ENCODE measurements at regions of chr5 and their contacts with region 1.

Region 1: GRCh38 chr5:42583322-42583721 is 160.1 kb downstream of the GHR start:
- DNase-seq: peak; percentile 56
- H3K4me3 Mint-ChIP-seq: no peak overlapping the region
- H3K27ac Mint-ChIP-seq: no peak overlapping the region
- H3K4me1 Mint-ChIP-seq: no peaks in the 10 kb centered on the region
- H3K27me3 Mint-ChIP-seq: peaks cover 60% of the 10 kb centered on the region
- CTCF ChIP-seq: peak; percentile 58

Region 2: DNA sequence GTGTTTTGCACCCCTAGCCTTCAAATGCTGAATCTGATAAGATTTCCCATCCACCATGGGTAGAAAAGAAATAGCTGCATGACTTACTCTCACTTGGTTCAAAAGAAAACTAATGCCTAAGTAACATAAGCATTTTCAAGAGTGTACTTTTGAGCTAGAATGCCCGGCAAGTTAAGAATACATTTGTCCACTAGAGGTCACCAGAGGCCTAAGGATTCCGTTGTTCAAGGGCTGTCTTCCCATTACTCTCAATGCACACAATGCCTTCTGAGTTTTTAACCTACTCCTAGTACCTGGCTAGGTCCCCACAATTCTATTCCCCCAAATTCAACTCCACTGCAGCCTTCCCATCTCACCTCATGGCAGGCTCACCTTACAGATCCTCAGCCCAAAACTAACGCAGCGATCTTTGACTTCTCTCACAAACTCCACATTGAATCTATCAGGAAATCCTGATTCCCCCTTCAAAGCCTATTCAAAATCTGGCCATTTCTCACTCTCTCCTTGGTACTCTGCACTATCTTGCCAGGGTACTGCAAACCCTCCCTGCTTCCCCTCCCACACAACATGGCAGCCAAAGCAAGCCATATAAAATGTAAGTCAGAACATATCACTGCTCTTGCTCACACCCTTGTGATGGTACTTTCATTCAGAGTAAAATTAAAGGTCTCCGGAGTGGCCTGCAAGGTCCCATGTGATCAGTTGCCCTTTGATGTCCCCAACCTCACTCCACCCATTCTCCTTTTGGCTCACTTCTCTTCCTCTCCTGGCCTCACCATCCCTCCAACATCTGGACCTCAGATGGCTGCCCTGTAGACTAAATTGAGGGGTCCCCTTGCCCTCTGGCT is 726.5 kb before region 1 on chr5:
- CTCF ChIA-PET with region 1: interaction called, 4 read pairs
- intact Hi-C with region 1: loop called (anchors 1 kb)
- DNase-seq: peak; percentile 60
- H3K4me3 Mint-ChIP-seq: no peak overlapping the region
- H3K27ac Mint-ChIP-seq: no peak overlapping the region
- H3K4me1 Mint-ChIP-seq: no peaks in the 10 kb centered on the region
- H3K27me3 Mint-ChIP-seq: no peaks in the 10 kb centered on the region
- CTCF ChIP-seq: peak; percentile 46

Region 3: DNA sequence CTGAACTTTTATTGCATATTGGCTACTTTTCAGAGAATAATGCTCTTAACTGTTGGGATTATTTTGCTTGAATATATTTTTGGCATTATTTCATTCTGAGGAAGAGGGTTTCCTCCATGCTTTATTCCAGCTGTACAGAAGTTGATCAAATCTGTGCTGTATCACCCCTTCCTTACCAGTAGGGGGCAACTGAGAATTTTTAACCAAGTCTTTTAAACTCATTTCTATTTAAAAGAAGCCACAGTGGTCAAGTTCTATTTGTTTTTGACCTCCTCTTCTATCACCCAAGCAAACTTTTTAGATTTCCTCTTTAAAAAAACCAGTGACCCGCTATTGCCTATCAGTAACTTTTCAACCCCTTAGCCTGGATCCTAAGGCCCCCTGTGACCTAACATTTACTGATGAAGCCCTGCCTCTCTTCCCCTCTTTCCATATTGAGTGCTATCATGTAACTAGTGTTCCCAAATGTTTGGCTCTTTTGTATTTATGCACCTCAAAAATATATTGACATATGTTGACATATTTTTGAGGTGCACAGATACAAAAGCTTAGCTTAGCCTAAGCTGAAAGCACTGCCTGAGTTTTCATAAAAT is 577.7 kb before region 1 on chr5:
- CTCF ChIA-PET with region 1: interaction called, 3 read pairs
- intact Hi-C with region 1: loop called (anchors 10 kb)
- DNase-seq: no peak
- H3K4me3 Mint-ChIP-seq: no peak overlapping the region
- H3K27ac Mint-ChIP-seq: no peak overlapping the region
- H3K4me1 Mint-ChIP-seq: no peaks in the 10 kb centered on the region
- H3K27me3 Mint-ChIP-seq: no peaks in the 10 kb centered on the region
- CTCF ChIP-seq: peak; percentile 71

Region 4: GRCh38 chr5:42228279-42228678 is 355.0 kb before region 1 on chr5:
- CTCF ChIA-PET with region 1: interaction called, 3 read pairs
- intact Hi-C with region 1: loop called (anchors 5 kb)
- DNase-seq: no peak
- H3K4me3 Mint-ChIP-seq: no peak overlapping the region
- H3K27ac Mint-ChIP-seq: no peak overlapping the region
- H3K4me1 Mint-ChIP-seq: no peaks in the 10 kb centered on the region
- H3K27me3 Mint-ChIP-seq: peaks cover 21% of the 10 kb centered on the region
- CTCF ChIP-seq: no peak

Region 5: DNA sequence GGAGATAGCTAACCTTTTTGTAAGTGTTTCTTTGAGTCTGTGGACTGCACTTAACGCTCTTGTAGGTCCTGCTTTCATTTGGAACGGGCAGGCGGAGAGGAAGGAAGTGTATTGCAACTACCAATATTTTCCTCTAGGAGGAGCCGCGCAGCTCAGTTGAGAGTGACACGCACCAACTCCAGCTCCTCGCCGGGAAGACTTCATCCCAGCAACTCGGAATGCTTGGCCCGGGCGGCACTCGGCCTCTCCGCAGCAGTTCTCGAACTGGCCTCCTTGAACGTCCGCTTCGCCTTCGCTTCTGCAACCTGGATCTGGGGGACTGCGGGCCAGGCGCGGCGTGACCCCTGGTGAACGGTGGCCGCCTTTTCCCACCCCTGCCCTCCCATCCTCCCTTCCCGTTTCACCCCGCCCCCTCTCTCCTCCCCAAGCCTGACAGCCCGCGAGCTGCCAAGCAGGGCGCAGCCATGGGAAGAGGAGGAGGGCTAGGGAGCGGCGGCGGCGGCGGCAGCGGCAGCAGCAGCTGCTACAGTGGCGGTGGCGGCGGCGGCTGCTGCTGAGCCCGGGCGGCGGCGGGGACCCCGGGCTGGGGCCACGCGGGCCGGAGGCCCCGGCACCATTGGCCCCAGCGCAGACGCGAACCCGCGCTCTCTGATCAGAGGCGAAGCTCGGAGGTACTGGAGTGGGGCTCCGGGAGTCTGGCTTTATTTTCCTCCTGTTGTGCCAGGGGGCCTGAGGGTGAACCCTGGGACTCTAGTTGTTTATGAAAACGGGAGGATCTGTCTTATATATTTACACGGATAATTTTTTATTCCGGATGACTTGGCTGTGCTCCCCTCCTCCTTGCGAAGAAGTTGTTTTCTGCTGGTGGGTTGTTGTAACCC is 159.8 kb before region 1 on chr5 and contains the start of gene GHR:
- CTCF ChIA-PET with region 1: interaction called, 13 read pairs
- intact Hi-C with region 1: loop called (anchors 10 kb)
- DNase-seq: peak; percentile 77
- H3K4me3 Mint-ChIP-seq: no peak within 1 kb of the TSS
- H3K27ac Mint-ChIP-seq: no peak within 1 kb of the TSS
- H3K4me1 Mint-ChIP-seq: no peaks in the 10 kb centered on the region
- H3K27me3 Mint-ChIP-seq: peaks cover 12% of the 10 kb centered on the region
- CTCF ChIP-seq: peak; percentile 77
- total RNA-seq, gene GHR: 0.45 and 0.69 TPM in 2 replicates

Region 6: GRCh38 chr5:42612750-42613366 is 29.5 kb after region 1 on chr5:
- CTCF ChIA-PET with region 1: no interaction called
- intact Hi-C with region 1: no loop called
- DNase-seq: no peak
- H3K4me3 Mint-ChIP-seq: no peak overlapping the region
- H3K27ac Mint-ChIP-seq: no peak overlapping the region
- H3K4me1 Mint-ChIP-seq: no peaks in the 10 kb centered on the region
- H3K27me3 Mint-ChIP-seq: peaks cover 65% of the 10 kb centered on the region
- CTCF ChIP-seq: no peak

Region 7: GRCh38 chr5:42676362-42676761 is 93.0 kb after region 1 on chr5:
- CTCF ChIA-PET with region 1: no interaction called
- intact Hi-C with region 1: no loop called
- DNase-seq: no peak
- H3K4me3 Mint-ChIP-seq: no peak overlapping the region
- H3K27ac Mint-ChIP-seq: no peak overlapping the region
- H3K4me1 Mint-ChIP-seq: no peaks in the 10 kb centered on the region
- H3K27me3 Mint-ChIP-seq: no peaks in the 10 kb centered on the region
- CTCF ChIP-seq: no peak